ENCODE measurements at regions of chr3 and their contacts with region 1.

Region 1: GRCh38 chr3:69051756-69052471 is at the start of gene TMF1:
- DNase-seq: peak; percentile 98
- H3K4me3 Mint-ChIP-seq: peak within 1 kb of the TSS; percentile 100
- H3K27ac Mint-ChIP-seq: peak within 1 kb of the TSS; percentile 96
- H3K4me1 Mint-ChIP-seq: peaks cover 54% of the 10 kb centered on the region
- H3K27me3 Mint-ChIP-seq: no peaks in the 10 kb centered on the region
- total RNA-seq, gene TMF1: 57.4 to 58.0 TPM

Region 2: GRCh38 chr3:68893600-68894239 is 158.2 kb before region 1 on chr3:
- CTCF ChIA-PET with region 1: no interaction called
- POLR2A ChIA-PET with region 1: no interaction called
- DNase-seq: no peak
- H3K4me3 Mint-ChIP-seq: no peak overlapping the region
- H3K27ac Mint-ChIP-seq: no peak overlapping the region
- H3K4me1 Mint-ChIP-seq: peaks cover 3% of the 10 kb centered on the region
- H3K27me3 Mint-ChIP-seq: peaks cover 23% of the 10 kb centered on the region

Region 3: DNA sequence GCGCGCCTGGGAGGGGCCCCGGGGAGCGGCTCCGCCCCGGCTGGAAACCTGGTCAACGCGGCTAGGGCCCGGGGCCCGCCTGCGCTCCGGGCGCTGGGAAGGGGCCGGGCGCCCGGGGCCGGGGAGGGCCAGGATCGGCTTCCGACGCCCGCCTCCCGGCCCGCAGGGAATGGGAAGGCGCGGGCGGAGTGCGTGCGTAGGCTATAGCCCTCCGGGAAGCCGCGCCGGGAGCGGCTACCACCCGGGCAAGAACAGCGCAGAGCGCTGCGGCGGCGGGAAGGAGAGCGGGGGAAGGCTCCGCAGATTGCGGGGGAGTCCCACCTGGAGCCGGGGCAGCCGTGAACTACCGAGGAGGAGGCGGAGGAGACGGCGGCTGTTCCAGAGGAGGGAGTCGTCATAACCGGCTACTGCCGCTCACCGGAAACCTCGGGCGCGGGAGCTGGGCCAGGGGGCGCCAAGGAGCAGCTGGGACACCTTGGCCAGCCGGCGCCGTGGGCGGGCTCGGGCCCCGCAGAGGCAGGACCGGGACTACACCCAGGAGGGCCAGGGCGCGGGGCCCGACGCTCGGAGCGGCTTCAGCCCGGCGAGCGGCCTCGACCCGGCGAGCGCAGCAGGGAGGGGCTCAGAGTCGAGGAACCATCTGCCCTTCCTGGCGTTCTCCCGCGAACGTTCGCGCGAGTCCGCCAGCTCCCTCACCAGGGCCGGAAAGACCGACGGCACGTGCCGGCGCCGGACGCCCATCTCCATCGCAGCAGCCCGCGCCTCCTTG is 38.5 kb before region 1 on chr3 and contains the start of gene EOGT:
- CTCF ChIA-PET with region 1: no interaction called
- POLR2A ChIA-PET with region 1: interaction called, 31 read pairs
- DNase-seq: peak; percentile 85
- H3K4me3 Mint-ChIP-seq: peak within 1 kb of the TSS; percentile 83
- H3K27ac Mint-ChIP-seq: peak within 1 kb of the TSS; percentile 76
- H3K4me1 Mint-ChIP-seq: peaks cover 41% of the 10 kb centered on the region
- H3K27me3 Mint-ChIP-seq: no peaks in the 10 kb centered on the region
- total RNA-seq, gene EOGT: 12.9 to 13.7 TPM

Region 4: DNA sequence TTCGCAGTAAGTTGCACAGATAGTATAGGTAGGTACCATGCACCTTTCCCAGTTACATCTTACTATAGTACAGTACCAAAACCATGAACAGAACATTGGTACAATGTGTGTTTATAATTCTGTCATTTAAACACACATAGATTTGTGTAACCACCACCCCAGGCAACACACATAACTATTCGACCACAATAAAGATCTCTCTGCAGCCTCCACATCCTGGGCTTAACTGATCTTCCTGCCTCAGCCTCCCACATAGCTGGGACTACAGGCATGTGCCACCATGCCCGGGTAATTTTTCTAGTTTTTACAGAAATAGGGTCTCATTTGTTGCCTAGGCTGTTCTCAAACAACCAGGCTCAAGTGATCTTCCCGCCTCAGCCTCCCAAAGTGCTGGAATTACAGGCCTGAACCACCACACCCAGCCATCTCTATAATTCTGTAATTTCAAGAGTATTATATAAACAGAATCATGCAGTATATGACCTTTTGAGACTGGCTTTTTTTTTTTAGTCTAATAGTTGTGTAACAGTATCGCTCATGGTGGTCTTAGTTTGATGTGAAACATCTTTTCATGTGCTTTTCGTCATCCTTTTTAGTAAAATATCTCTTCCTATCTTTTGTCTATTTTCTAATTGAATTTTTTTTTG is 13.5 kb after region 1 on chr3:
- CTCF ChIA-PET with region 1: interaction called, 16 read pairs
- POLR2A ChIA-PET with region 1: interaction called, 72 read pairs
- DNase-seq: peak; percentile 42
- H3K4me3 Mint-ChIP-seq: no peak overlapping the region
- H3K27ac Mint-ChIP-seq: peak overlapping the region; percentile 70
- H3K4me1 Mint-ChIP-seq: peaks cover 53% of the 10 kb centered on the region
- H3K27me3 Mint-ChIP-seq: no peaks in the 10 kb centered on the region

Region 5: GRCh38 chr3:69108811-69109210 is 56.9 kb after region 1 on chr3:
- CTCF ChIA-PET with region 1: no interaction called
- POLR2A ChIA-PET with region 1: interaction called, 16 read pairs
- DNase-seq: no peak
- H3K4me3 Mint-ChIP-seq: no peak overlapping the region
- H3K27ac Mint-ChIP-seq: no peak overlapping the region
- H3K4me1 Mint-ChIP-seq: peaks cover 13% of the 10 kb centered on the region
- H3K27me3 Mint-ChIP-seq: no peaks in the 10 kb centered on the region

Region 6: GRCh38 chr3:69209413-69209812 is 157.5 kb after region 1 on chr3:
- CTCF ChIA-PET with region 1: no interaction called
- POLR2A ChIA-PET with region 1: no interaction called
- DNase-seq: no peak
- H3K4me3 Mint-ChIP-seq: no peak overlapping the region
- H3K27ac Mint-ChIP-seq: no peak overlapping the region
- H3K4me1 Mint-ChIP-seq: peaks cover 82% of the 10 kb centered on the region
- H3K27me3 Mint-ChIP-seq: no peaks in the 10 kb centered on the region

Region 7: GRCh38 chr3:69231929-69232440 is 180.1 kb after region 1 on chr3:
- CTCF ChIA-PET with region 1: no interaction called
- POLR2A ChIA-PET with region 1: no interaction called
- DNase-seq: no peak
- H3K4me3 Mint-ChIP-seq: no peak overlapping the region
- H3K27ac Mint-ChIP-seq: no peak overlapping the region
- H3K4me1 Mint-ChIP-seq: peaks cover 17% of the 10 kb centered on the region
- H3K27me3 Mint-ChIP-seq: no peaks in the 10 kb centered on the region